ENCODE measurements at regions of chr5 and their contacts with region 1.

Region 1: DNA sequence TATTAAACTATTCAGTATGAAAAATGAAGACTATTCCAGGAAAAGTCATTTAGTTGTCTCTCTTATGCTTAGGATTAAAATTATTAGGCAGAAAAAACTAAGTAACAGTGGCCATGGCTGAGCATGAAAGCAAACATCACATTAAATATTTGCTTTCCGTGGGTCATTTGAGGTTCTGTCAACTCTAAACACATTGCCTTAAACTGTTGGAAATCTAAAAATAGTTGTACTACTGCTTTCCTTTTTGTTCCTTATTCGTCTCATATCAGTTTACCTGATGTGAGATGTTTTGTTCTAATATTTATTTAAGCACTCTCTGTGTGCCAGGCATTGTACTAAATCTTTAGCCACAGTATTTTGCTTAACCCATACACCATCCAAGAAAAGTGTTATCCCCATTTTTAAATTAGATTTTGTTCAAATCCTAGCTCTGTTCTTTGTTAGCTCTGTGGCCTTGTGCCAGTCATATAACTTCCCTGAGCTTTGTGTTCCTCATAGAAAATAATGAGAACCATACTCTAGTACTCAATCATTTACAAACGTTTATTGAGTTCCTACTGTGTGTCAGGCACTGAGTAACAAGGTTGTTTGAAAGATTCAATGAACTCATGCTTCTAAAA is 18.7 kb upstream of the ZNF608 start:
- DNase-seq: no peak
- ATAC-seq: peak in 2 of 8 donors; percentile 14 to 35
- H3K4me3 ChIP-seq: no peak overlapping the region
- H3K27ac ChIP-seq: no peak overlapping the region
- H3K4me1 ChIP-seq: no peaks in the 10 kb centered on the region
- H3K27me3 ChIP-seq: no peaks in the 10 kb centered on the region
- CTCF ChIP-seq: no peak

Region 2: GRCh38 chr5:124193371-124193789 is 571.7 kb before region 1 on chr5:
- intact Hi-C with region 1: no loop called
- DNase-seq: no peak
- ATAC-seq: peak in 5 of 8 donors; percentile 50 to 84 (median 60)
- H3K4me3 ChIP-seq: no peak overlapping the region
- H3K27ac ChIP-seq: no peak overlapping the region
- H3K4me1 ChIP-seq: peaks cover 0 to 13% (median 6%) of the 10 kb centered on the region in 9 donors
- H3K27me3 ChIP-seq: no peaks in the 10 kb centered on the region
- CTCF ChIP-seq: no peak

Region 3: GRCh38 chr5:124871303-124871702 is 106.2 kb after region 1 on chr5:
- intact Hi-C with region 1: loop called in 1 of 10 experiments (anchors 10 kb)
- DNase-seq: no peak
- ATAC-seq: no peak
- H3K4me3 ChIP-seq: no peak overlapping the region
- H3K27ac ChIP-seq: no peak overlapping the region
- H3K4me1 ChIP-seq: peaks cover 0 to 31% (median 16%) of the 10 kb centered on the region in 9 donors
- H3K27me3 ChIP-seq: no peaks in the 10 kb centered on the region
- CTCF ChIP-seq: no peak